Psoas muscle (tissue), 8 donors: ENCODE measurements at regions of chr3 and their contacts with region 1.

Region 1: GRCh38 chr3:150408221-150409102 is at the start of gene TSC22D2:
- DNase-seq: peak; percentile 97 to 98
- ATAC-seq: peak; percentile 74 to 82 (median 78)
- H3K4me3 ChIP-seq: peak within 1 kb of the TSS; percentile 88
- H3K27ac ChIP-seq: peak within 1 kb of the TSS; percentile 99
- H3K4me1 ChIP-seq: peaks cover 16% of the 10 kb centered on the region
- H3K27me3 ChIP-seq: no peaks in the 10 kb centered on the region
- CTCF ChIP-seq: peak; percentile 14
- total RNA-seq, gene TSC22D2: 29.7 to 63.6 (median 36.2) TPM

Region 2: GRCh38 chr3:150170852-150171520 is 237.5 kb before region 1 on chr3:
- intact Hi-C with region 1: no loop called
- DNase-seq: peak in 1 of 2 donors; percentile 52
- ATAC-seq: no peak
- H3K4me3 ChIP-seq: no peak overlapping the region
- H3K27ac ChIP-seq: no peak overlapping the region
- H3K4me1 ChIP-seq: peaks cover 31% of the 10 kb centered on the region
- H3K27me3 ChIP-seq: no peaks in the 10 kb centered on the region
- CTCF ChIP-seq: no peak

Region 3: DNA sequence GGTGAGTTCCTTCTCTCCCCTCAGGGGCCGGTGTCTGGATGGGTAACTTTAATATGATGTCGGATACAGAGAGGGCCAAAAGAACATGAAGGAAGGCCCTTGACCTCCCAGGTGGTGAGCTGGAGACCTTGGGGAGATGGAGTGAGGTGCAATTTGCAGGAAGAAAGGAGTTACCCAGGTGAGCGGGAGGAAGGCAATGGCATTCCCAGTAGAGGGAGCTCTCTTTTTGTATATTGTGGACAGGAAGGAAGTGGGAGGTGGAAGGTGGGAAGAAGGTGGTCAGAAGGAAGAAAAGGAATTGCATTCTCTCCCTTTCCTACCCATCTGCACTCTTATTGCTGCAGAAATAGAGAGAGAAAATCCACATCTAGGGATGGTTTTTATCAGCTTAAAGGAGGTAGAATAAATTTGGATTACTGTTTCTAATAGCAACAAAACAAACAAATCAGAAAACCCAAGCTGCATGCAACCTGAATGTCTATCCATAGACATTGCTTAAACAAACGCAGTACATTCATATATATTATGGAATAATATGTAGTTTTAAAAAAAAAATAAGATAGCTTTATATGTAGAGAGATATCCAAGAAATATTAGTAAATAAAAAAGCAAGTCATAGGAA is 169.4 kb before region 1 on chr3:
- intact Hi-C with region 1: loop called in 1 of 2 experiments (anchors 5 kb)
- DNase-seq: no peak
- ATAC-seq: no peak
- H3K4me3 ChIP-seq: no peak overlapping the region
- H3K27ac ChIP-seq: no peak overlapping the region
- H3K4me1 ChIP-seq: peaks cover 36% of the 10 kb centered on the region
- H3K27me3 ChIP-seq: no peaks in the 10 kb centered on the region
- CTCF ChIP-seq: peak; percentile 13

Region 4: DNA sequence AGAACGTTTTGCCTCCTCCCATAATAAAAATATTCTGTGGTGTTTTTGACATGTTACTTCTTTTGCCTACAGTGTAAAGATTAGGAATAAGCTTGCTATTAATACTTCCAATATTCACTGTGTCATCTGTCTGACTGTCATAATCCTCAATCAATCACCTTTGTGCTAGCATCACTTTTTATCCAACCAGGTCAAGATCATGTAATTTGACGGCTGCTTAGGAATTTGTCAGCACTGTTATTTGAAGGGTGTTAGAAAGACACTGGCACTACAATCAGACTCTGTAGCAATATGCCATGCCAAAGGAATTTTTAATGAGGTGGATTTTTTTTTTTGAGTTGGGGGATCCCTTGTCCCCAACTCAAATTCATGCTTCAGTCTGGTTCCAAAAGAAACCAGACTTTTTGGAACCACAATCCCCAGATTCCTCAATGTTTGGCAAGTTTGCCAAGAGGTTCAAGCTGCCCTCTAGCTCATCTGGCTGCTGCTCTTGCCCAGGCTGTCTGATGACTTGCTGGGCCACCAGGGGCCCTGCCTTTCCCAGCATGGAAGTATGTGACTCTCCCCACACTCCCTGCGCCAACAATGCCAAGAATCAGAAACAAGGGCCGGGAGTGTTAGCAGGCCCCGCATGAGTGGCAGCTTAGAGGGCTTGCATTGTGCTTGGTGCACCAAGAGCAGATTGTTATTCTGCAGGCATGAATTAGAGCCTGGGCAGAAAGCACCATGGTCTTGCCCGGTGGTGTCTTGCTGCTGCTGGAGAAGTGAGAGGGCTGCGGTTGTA is 59.0 kb before region 1 on chr3:
- intact Hi-C with region 1: loop called in 1 of 2 experiments (anchors 5 kb)
- DNase-seq: peak; percentile 21 to 55
- ATAC-seq: peak; percentile 63 to 85 (median 80)
- H3K4me3 ChIP-seq: no peak overlapping the region
- H3K27ac ChIP-seq: peak overlapping the region; percentile 58
- H3K4me1 ChIP-seq: peaks cover 29% of the 10 kb centered on the region
- H3K27me3 ChIP-seq: no peaks in the 10 kb centered on the region
- CTCF ChIP-seq: no peak

Region 5: DNA sequence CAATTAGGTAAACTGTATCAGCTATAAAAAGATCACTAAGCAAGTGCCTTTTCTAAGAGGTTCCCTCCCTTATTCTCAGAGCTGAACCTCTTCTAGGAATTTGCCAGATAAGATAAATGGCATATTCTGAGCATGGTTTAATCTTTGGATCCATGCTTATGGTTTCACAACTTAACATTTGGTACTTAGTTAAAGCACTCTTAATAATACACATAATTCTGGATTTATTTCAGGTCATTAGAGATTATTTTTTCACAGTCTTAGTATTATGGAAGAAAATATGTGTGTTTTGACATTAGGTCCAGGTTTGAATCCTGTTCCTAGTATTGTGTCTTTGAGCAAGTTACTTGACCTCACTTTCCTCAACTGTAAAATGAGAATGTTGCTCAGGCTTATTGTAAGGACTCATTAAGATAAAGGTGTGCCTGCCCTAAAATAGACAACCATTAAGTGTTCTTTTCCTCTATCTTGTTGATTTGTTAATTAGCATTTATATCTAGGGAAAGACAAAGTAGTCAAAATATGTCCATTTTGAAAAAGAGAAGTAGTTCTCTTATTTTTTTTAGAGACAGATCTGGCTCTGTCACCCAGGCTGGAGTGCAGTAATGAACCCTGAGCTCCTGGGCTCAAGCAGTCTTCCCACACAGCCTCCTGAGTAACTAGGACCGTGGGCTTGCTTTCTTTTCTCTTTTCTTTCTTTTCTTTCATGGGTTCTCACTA is 43.0 kb after region 1 on chr3:
- intact Hi-C with region 1: loop called in 1 of 2 experiments (anchors 5 kb)
- DNase-seq: no peak
- ATAC-seq: no peak
- H3K4me3 ChIP-seq: no peak overlapping the region
- H3K27ac ChIP-seq: no peak overlapping the region
- H3K4me1 ChIP-seq: peaks cover 51% of the 10 kb centered on the region
- H3K27me3 ChIP-seq: no peaks in the 10 kb centered on the region
- CTCF ChIP-seq: no peak

Region 6: DNA sequence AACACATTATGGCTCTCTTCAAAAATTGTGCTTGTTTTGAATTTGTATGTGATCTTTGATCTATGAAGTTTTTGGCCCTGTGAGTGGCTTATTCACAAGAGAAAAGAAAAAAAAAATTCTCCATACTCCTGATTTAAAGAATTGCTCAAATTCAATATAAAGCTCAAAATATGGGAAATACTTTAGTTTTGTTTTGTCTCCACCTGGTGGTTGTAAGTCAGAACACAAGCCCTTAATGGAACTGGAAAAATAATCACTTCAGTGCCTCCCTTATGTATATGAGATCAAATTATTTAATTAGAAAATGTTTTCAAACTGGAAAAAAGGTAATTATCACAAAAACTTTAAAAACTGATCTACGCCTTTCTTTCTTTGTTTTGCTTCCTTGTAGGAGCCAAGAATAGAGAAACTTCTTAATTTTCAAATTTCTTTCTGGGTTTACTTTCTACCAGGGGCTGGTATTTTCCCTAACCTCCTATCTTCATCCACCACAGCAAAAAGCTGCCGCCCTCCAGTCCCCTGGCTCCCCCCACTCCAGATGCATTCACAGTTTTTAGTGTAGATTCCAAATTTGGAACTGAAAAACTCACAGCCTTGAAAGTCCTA is 87.2 kb after region 1 on chr3:
- intact Hi-C with region 1: loop called in 1 of 2 experiments (anchors 5 kb)
- DNase-seq: no peak
- ATAC-seq: peak in 3 of 4 donors; percentile 57 to 70 (median 65)
- H3K4me3 ChIP-seq: no peak overlapping the region
- H3K27ac ChIP-seq: no peak overlapping the region
- H3K4me1 ChIP-seq: no peaks in the 10 kb centered on the region
- H3K27me3 ChIP-seq: no peaks in the 10 kb centered on the region
- CTCF ChIP-seq: peak; percentile 83

Region 7: DNA sequence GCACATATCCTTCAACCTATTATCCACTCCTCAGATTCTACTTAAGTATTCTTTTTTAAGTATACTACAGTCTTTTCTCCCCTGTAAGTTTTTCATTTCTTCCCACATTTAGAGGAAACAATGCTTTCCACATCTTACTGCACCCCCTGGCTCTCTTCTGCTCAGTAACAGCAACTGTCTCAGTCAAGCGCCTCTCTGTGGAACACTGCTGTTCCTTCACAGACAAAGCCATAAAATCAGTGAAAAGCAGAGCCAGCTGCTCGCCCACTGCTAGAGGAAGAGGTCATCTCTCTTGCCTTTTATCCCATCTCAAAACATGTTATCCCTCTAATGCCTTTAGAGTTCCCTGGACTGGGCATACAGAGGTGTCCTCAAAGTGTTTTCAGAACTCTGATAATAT is 113.0 kb after region 1 on chr3:
- intact Hi-C with region 1: no loop called
- DNase-seq: no peak
- ATAC-seq: no peak
- H3K4me3 ChIP-seq: no peak overlapping the region
- H3K27ac ChIP-seq: no peak overlapping the region
- H3K4me1 ChIP-seq: no peaks in the 10 kb centered on the region
- H3K27me3 ChIP-seq: peaks cover 0 to 3% (median 0%) of the 10 kb centered on the region in 3 donors
- CTCF ChIP-seq: no peak

Region 8: DNA sequence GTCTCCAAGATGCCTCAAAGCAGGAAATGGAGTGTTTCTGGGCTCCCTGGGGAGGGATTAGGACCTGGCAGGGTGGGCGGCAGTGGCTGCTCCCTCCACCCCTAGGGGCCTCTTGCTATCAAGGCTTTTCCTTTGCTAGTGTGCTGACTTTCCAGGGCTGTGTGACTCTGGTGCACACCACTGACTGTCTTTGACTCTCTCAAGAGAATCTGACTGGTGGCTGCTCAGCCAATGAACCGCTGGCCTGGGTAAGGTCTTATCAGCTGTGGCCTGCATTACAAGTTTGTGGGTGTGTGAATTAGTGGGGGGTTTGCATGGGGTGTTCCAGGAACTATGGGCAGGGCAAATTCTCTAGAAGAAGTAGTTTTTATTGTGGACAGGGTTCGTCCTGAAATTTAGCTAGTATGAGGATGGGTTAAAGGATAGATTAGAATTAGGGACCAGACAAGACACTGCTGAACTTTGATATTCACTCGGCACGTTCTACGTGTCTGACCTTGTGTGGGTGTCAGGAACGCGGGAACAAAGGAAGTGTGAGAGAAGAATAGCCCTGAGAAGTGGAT is 325.0 kb after region 1 on chr3:
- intact Hi-C with region 1: no loop called
- DNase-seq: no peak
- ATAC-seq: no peak
- H3K4me3 ChIP-seq: no peak overlapping the region
- H3K27ac ChIP-seq: no peak overlapping the region
- H3K4me1 ChIP-seq: peaks cover 2% of the 10 kb centered on the region
- H3K27me3 ChIP-seq: no peaks in the 10 kb centered on the region
- CTCF ChIP-seq: no peak